ENCODE measurements at regions of chr1 and their contacts with region 1.

Region 1: GRCh38 chr1:223811634-223812415 is 33.9 kb downstream of the TP53BP2 start:
- DNase-seq: no peak
- H3K4me3 Mint-ChIP-seq: no peak overlapping the region
- H3K27ac Mint-ChIP-seq: no peak overlapping the region
- H3K4me1 Mint-ChIP-seq: peaks cover 33% of the 10 kb centered on the region
- H3K27me3 Mint-ChIP-seq: no peaks in the 10 kb centered on the region

Region 2: DNA sequence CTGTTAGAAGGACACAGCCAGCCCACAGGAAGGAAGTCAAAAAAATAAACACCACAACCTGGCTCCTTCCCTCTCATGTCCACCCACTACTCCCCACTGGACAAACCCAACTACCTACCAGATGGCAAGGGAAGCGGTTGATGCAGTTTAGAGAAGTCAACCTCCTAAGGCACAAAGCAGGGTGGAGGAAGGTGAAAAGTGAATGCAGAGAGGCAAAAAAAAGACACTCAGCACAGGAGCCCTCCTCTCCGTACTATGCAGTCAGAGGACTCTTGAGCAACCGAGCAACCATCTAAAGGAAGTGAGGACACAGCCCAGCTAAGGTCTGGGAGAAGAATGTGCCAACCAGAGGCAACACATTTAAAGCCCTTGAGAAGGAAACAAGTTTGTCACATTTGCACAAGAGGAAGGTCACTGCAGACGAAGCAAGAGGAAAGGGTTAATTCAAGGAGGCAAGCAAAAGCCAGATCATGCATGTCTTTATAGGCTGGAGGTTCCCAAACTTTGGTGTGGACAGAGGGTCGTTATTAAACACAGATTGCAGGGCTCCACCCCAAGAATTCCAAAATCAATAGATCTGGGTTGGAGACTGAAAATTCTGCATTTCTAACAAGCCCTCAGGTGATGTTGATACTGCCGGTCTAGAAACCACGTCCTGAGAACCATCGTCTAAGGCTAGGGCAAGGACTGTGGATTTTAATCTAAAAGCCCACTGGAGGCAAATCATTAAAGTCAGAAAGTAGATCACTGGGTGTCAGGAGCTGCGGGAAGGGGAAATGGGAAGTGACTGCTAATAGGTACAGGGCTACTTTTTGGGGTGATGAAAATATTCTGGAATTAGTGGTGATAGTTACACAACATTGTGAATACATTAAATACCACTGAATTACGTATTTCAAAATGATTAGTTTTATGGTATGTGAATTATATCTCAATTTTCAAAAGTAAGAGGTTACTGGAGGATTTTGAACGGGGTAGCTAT is 14.2 kb after region 1 on chr1:
- CTCF ChIA-PET with region 1: interaction called, 16 read pairs
- intact Hi-C with region 1: no loop called
- DNase-seq: no peak
- H3K4me3 Mint-ChIP-seq: no peak overlapping the region
- H3K27ac Mint-ChIP-seq: no peak overlapping the region
- H3K4me1 Mint-ChIP-seq: peaks cover 71% of the 10 kb centered on the region
- H3K27me3 Mint-ChIP-seq: no peaks in the 10 kb centered on the region

Region 3: GRCh38 chr1:225612287-225612686 is 1800.5 kb after region 1 on chr1:
- CTCF ChIA-PET with region 1: no interaction called
- intact Hi-C with region 1: no loop called
- DNase-seq: no peak
- H3K4me3 Mint-ChIP-seq: no peak overlapping the region
- H3K27ac Mint-ChIP-seq: no peak overlapping the region
- H3K4me1 Mint-ChIP-seq: no peaks in the 10 kb centered on the region
- H3K27me3 Mint-ChIP-seq: no peaks in the 10 kb centered on the region

Measured in activated naive CD4-positive, alpha-beta T cell treated with anti-CD3 and anti-CD28 coated beads for 36 hours (primary cell).